ENCODE measurements at regions of chr2 and their contacts with region 1.

Region 1: DNA sequence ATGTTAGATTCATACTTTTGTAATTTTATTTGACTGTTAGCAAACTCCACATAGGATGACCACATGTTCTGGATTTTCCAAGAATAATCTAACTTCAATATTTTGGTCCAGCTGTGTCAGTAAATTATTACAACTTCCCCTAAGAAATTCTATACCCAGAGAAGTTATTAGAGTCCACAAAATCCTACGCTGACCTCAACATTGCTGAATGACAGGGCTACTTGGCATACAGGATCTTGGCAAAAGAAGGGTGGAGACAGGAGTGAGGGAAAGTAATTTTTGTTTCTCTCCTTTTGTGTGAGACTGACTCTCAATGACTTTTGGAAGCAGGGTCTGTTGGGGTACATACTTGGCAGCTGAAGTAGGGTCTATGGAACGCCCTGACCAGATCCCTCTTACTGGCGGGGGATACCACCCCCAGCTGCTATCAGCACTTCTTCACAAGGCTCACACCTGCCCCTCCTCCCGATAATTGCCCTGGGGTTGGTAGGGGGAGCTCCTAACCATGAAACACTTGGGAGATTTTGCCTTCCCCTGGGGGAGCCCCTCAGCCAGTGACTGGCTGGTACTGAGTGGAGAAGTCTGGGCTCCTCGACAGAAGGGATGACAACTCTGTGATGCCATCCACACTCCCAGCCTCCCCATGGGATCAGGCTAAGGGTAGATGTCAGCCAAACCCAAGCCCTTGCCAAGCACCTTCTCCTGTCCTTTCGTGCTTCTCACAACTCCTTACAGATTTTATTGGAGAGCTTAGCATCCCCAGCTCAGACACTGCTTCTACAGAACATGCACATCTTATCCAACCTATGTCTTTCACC is 110.6 kb upstream of the FHL2 start:
- DNase-seq: no peak
- H3K4me3 ChIP-seq: no peak overlapping the region
- H3K27ac ChIP-seq: no peak overlapping the region
- H3K4me1 ChIP-seq: no peaks in the 10 kb centered on the region
- H3K27me3 ChIP-seq: no peaks in the 10 kb centered on the region
- CTCF ChIP-seq: no peak

Region 2: DNA sequence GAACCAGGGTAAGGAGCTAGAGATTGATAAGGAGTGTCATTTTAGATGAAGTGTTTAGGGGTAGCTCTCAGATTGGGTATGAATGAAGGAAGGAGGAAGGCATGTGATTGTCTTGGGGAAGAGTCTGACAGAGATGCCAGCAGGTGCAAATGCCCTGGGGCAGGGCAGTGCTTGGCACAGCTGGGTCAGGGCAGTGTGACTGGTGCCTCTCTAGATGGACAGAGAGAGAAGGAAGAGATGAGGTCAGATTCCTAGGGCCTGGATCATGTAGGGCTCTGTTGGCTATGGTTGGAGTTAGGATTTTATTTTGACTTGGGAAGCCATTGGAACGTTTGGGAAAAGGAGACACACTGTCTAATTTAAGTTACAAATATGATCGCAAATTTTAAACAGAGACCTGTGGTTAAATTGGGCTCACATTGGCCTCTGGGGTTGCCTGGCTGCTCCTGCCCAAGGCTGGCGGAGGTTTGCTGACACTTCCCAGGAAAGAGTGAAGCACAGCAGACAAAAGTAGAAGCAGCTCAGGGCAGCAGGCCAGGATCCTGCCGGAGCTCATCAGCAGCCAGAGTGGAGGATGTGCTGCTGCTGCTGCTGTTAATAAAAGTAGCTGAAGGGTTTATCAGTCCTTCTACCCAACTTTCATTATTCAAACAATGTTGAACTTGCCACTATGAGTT is 78.0 kb before region 1 on chr2:
- intact Hi-C with region 1: loop called (anchors 5 kb)
- DNase-seq: no peak
- H3K4me3 ChIP-seq: no peak overlapping the region
- H3K27ac ChIP-seq: no peak overlapping the region
- H3K4me1 ChIP-seq: no peaks in the 10 kb centered on the region
- H3K27me3 ChIP-seq: no peaks in the 10 kb centered on the region
- CTCF ChIP-seq: no peak

Region 3: DNA sequence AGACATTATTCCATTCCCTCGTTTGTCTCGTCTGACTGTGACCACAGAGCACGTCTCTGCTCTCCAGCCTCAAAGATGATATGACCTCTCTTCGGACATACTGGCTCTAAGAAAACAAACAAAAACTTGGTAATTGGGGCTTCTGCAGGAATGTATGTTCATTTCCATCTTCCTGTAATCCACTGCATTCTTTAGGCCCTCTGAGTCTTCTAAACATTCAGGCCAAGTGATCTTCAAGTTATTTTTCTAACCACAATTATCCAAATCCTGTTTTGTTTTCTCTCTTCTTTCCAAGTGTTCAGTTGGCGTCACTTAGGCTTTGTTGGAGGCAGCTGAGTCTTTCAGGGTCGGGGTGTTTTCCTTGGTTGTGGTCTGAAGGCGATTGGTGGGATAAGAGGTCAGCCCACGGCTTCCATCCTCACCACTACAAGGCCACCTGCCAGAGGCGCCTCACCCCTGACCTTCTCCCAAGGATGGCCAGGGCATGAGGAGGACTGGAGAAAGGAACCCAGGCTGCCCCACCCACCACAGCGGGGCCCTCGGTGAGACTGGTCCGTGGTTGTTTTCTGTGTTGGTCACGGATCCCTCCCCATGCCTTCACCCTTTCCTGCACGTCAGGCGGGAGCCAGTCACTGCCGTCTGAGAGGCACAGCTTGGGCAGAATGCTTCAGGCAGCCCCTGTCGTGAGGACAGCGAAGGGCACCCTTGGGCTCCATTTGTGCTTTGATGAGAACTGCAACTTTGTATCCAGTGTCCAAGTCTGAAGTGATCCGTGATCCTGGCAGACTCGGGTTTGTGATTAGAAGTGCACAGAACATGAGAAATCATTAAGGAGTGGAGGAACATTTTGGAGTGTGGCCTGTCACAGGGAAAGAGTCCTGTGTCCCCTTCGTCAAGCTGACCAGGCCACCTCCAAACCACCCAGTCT is 22.1 kb before region 1 on chr2:
- intact Hi-C with region 1: no loop called
- DNase-seq: no peak
- H3K4me3 ChIP-seq: no peak overlapping the region
- H3K27ac ChIP-seq: no peak overlapping the region
- H3K4me1 ChIP-seq: no peaks in the 10 kb centered on the region
- H3K27me3 ChIP-seq: no peaks in the 10 kb centered on the region
- CTCF ChIP-seq: no peak

Region 4: DNA sequence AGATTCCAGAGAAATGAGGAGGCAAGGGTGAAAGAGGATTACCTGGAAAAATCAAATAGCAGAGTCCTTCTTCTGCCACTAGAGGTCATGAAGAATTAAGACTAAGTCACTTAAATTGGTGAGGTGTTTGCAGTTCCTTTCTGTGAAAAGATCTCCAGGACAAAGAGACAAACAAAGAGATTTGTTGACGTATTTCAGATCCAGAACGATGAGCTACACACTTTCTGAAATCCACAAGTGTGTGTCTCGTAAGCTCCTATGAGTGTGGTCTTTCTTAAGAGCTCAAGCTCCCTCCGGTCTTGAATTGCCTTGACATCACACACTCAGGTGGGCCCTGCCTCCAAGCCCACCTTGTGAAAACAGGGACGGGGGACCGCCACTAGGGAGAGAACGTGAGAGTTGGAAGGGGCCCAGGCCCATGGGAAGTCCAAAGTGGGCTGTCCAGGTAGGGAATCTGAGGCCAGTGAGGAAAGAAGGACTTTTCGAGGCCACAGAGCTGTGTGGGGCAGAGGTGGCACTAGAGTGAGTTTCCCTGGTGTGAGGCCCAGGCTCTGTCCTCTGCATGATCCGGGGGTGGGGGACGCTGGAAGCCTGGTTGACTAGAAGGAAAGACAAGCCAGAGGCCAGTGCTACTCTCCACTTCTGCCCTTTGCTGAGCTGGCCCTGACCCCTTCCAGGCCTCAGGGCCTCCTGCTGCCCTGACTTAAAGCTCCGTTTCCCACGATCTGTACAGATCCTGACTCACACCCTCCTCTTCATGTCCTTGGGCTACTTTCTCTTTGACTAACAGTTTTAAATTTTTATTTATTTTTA is 67.2 kb after region 1 on chr2:
- intact Hi-C with region 1: no loop called
- DNase-seq: no peak
- H3K4me3 ChIP-seq: no peak overlapping the region
- H3K27ac ChIP-seq: no peak overlapping the region
- H3K4me1 ChIP-seq: peaks cover 0 to 4% of the 10 kb centered on the region in 2 donors
- H3K27me3 ChIP-seq: no peaks in the 10 kb centered on the region
- CTCF ChIP-seq: peak; percentile 44 to 70 (median 46)

Measured in ascending aorta (tissue), 2 donors.